CD4-positive, alpha-beta T cell (primary cell): ENCODE measurements at regions of chr2 and their contacts with region 1.

Region 1: GRCh38 chr2:61764035-61764800 is 89.6 kb downstream of the FAM161A start:
- DNase-seq: peak; percentile 85 to 99 (median 93)
- ATAC-seq: peak; percentile 96
- H3K4me3 ChIP-seq: peak overlapping the region; percentile 89
- H3K4me3 Mint-ChIP-seq: peak overlapping the region; percentile 96
- H3K27ac ChIP-seq: peak overlapping the region; percentile 92 to 98
- H3K27ac Mint-ChIP-seq: peak overlapping the region; percentile 96
- H3K4me1 ChIP-seq: peaks cover 13% of the 10 kb centered on the region
- H3K4me1 Mint-ChIP-seq: peaks cover 22% of the 10 kb centered on the region
- H3K27me3 ChIP-seq: no peaks in the 10 kb centered on the region
- H3K27me3 Mint-ChIP-seq: no peaks in the 10 kb centered on the region
- CTCF ChIP-seq: no peak

Region 2: DNA sequence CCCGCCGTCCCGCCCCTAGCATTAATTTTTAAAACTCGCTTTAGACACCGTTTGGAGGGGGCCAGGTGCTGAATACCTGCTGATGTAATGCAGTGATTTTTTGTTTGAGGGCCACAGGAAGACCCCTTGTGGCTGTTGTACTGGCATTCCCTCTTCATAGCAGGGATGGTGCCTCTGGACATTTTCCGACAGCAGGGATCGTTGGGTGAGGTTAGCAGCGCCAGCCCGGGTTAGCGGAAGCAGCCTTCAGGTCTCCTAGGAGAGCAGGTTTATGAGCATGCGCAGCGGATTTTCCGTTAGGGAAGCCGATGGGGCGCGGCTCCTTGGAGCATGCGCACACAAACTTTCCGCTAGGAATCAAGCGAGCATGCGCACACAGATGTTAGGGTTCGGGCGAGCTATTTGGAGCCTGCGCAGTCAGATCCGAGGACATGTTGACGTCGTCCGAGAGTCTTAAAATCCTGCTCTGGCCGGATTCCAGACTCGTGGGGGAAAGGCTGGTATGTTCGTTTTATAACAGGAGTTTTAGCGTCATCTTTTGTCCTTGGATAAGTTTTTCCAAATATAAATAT is 619.4 kb before region 1 on chr2:
- CTCF ChIA-PET with region 1: no interaction called
- POLR2A ChIA-PET with region 1: interaction called, 5 read pairs
- intact Hi-C with region 1: loop called in 1 of 2 experiments (anchors 10 kb)
- DNase-seq: peak; percentile 80 to 97 (median 88)
- ATAC-seq: peak; percentile 89
- H3K4me3 ChIP-seq: peak overlapping the region; percentile 70
- H3K4me3 Mint-ChIP-seq: peak overlapping the region; percentile 89
- H3K27ac ChIP-seq: peak overlapping the region; percentile 21 to 69
- H3K27ac Mint-ChIP-seq: peak overlapping the region; percentile 86
- H3K4me1 ChIP-seq: peaks cover 12% of the 10 kb centered on the region
- H3K4me1 Mint-ChIP-seq: peaks cover 7% of the 10 kb centered on the region
- H3K27me3 ChIP-seq: no peaks in the 10 kb centered on the region
- H3K27me3 Mint-ChIP-seq: no peaks in the 10 kb centered on the region
- CTCF ChIP-seq: no peak

Region 3: GRCh38 chr2:61694312-61695274 is 69.6 kb before region 1 on chr2:
- CTCF ChIA-PET with region 1: no interaction called
- POLR2A ChIA-PET with region 1: interaction called, 4 read pairs
- intact Hi-C with region 1: loop called (anchors 2 kb)
- DNase-seq: peak; percentile 65 to 90 (median 80)
- ATAC-seq: peak; percentile 95
- H3K4me3 ChIP-seq: peak overlapping the region; percentile 83
- H3K4me3 Mint-ChIP-seq: peak overlapping the region; percentile 89
- H3K27ac ChIP-seq: peak overlapping the region; percentile 29 to 59
- H3K27ac Mint-ChIP-seq: peak overlapping the region; percentile 85
- H3K4me1 ChIP-seq: peaks cover 11% of the 10 kb centered on the region
- H3K4me1 Mint-ChIP-seq: peaks cover 9% of the 10 kb centered on the region
- H3K27me3 ChIP-seq: no peaks in the 10 kb centered on the region
- H3K27me3 Mint-ChIP-seq: no peaks in the 10 kb centered on the region
- CTCF ChIP-seq: peak; percentile 31

Region 4: GRCh38 chr2:61854474-61855182 is 90.4 kb after region 1 on chr2:
- CTCF ChIA-PET with region 1: no interaction called
- POLR2A ChIA-PET with region 1: interaction called, 3 read pairs
- intact Hi-C with region 1: loop called (anchors 1 to 5 kb)
- DNase-seq: peak; percentile 75 to 97 (median 83)
- ATAC-seq: peak; percentile 91
- H3K4me3 ChIP-seq: peak overlapping the region; percentile 98
- H3K4me3 Mint-ChIP-seq: peak overlapping the region; percentile 97
- H3K27ac ChIP-seq: peak overlapping the region; percentile 65 to 79
- H3K27ac Mint-ChIP-seq: peak overlapping the region; percentile 94
- H3K4me1 ChIP-seq: peaks cover 14% of the 10 kb centered on the region
- H3K4me1 Mint-ChIP-seq: peaks cover 16% of the 10 kb centered on the region
- H3K27me3 ChIP-seq: no peaks in the 10 kb centered on the region
- H3K27me3 Mint-ChIP-seq: no peaks in the 10 kb centered on the region
- CTCF ChIP-seq: no peak

Region 5: GRCh38 chr2:62705007-62705829 is 941.0 kb after region 1 on chr2 and contains the start of gene EHBP1:
- CTCF ChIA-PET with region 1: no interaction called
- POLR2A ChIA-PET with region 1: no interaction called
- intact Hi-C with region 1: loop called in 1 of 2 experiments (anchors 10 kb)
- DNase-seq: peak; percentile 93 to 99 (median 97)
- ATAC-seq: peak; percentile 96
- H3K4me3 ChIP-seq: peak within 1 kb of the TSS; percentile 80
- H3K4me3 Mint-ChIP-seq: peak within 1 kb of the TSS; percentile 91
- H3K27ac ChIP-seq: peak within 1 kb of the TSS in 1 of 2 donors; percentile 24
- H3K27ac Mint-ChIP-seq: peak within 1 kb of the TSS; percentile 88
- H3K4me1 ChIP-seq: peaks cover 21% of the 10 kb centered on the region
- H3K4me1 Mint-ChIP-seq: peaks cover 36% of the 10 kb centered on the region
- H3K27me3 ChIP-seq: no peaks in the 10 kb centered on the region
- H3K27me3 Mint-ChIP-seq: no peaks in the 10 kb centered on the region
- CTCF ChIP-seq: no peak
- total RNA-seq, gene EHBP1: 21.4 to 22.3 TPM